A673 (cell line): ENCODE measurements at regions of chr2 and their contacts with region 1.

Region 1: DNA sequence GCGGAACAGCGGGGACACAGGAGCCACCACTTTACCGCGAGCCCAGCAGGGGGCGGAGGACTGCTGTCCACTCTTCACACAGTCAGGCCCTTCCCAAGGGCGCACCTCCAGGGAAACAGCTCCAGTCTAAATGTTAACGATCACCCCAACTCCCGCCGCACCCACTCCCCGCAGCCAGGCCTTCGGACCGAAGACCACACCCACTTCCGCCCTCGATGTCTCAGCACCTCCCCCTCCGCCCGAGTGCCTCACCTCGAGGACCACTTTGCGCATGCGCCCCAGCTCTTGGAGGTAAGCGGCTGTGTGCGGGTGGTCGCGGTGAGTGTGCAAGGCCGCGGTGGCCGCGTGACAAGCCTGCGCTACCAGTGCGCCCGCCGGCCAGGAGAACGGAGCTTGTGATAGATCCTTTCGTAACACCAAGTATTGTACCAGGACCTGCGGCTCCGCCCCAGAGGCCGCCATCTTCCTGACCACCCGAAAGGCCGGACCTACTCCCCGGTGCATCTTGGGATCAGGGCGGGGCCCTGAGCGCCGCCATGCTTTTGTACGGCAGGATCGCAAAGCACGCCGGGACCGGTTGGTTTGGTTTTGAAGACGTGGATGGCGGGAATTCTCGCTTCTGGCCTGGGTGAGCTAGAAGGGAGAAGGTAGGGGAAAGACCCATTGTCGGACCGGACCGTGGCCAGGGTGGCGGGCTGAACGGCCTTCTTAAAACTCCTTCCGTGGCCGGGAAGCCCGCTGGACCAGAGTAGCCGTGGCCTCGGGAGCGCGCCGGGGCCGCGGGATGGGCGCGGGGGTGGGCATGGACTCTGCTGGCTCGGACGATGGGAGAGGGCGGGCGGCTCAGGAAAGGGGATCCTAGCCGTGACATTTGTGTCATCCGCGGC is at the starts of genes CENPO and PTRHD1:
- DNase-seq: peak; percentile 98
- H3K4me3 ChIP-seq: peak within 1 kb of the TSS; percentile 92
- H3K27ac ChIP-seq: peak within 1 kb of the TSS; percentile 99
- H3K4me1 ChIP-seq: peaks cover 23% of the 10 kb centered on the region
- H3K27me3 ChIP-seq: no peaks in the 10 kb centered on the region
- CTCF ChIP-seq: peak; percentile 38; the same call in 1 of the 2 replicates
- total RNA-seq, gene CENPO: 61.9 and 69.4 TPM in 2 replicates
- total RNA-seq, gene PTRHD1: 33.4 and 34.9 TPM in 2 replicates

Region 2: GRCh38 chr2:24490674-24491625 is 302.2 kb before region 1 on chr2 and contains the start of gene NCOA1:
- CTCF ChIA-PET with region 1: no interaction called
- POLR2A ChIA-PET with region 1: no interaction called
- intact Hi-C with region 1: loop called (anchors 2 kb)
- DNase-seq: peak; percentile 96
- H3K4me3 ChIP-seq: peak within 1 kb of the TSS; percentile 84
- H3K27ac ChIP-seq: peak within 1 kb of the TSS; percentile 87
- H3K4me1 ChIP-seq: peaks cover 46% of the 10 kb centered on the region
- H3K27me3 ChIP-seq: no peaks in the 10 kb centered on the region
- CTCF ChIP-seq: no peak
- total RNA-seq, gene NCOA1: 27.5 TPM in 2 replicates

Region 3: DNA sequence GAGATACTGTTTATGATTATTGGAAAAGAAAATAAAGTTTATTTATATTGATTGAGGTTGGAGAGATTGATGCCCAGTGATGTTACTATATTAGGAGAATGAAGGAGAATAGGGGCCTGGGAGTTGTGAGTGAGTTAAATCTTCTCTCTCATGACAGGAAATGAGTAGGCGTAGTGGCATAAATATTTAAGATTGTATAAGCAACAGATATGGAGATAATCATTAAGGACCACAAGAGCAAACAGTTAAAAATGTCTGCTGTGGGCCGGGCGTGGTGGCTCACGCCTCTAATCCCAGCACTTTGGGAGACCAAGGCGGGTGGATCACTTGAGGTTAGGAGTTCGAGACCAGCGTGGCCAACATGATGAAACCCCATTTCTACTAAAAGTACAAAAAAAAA is 62.6 kb before region 1 on chr2:
- CTCF ChIA-PET with region 1: interaction called, 14 read pairs
- POLR2A ChIA-PET with region 1: no interaction called
- intact Hi-C with region 1: no loop called
- DNase-seq: peak; percentile 83
- H3K4me3 ChIP-seq: no peak overlapping the region
- H3K27ac ChIP-seq: peak overlapping the region; percentile 47
- H3K4me1 ChIP-seq: peaks cover 17% of the 10 kb centered on the region
- H3K27me3 ChIP-seq: no peaks in the 10 kb centered on the region
- CTCF ChIP-seq: no peak

Region 4: GRCh38 chr2:25218100-25218499 is 425.0 kb after region 1 on chr2:
- CTCF ChIA-PET with region 1: no interaction called
- POLR2A ChIA-PET with region 1: interaction called, 11 read pairs
- intact Hi-C with region 1: no loop called
- DNase-seq: no peak
- H3K4me3 ChIP-seq: no peak overlapping the region
- H3K27ac ChIP-seq: no peak overlapping the region
- H3K4me1 ChIP-seq: no peaks in the 10 kb centered on the region
- H3K27me3 ChIP-seq: no peaks in the 10 kb centered on the region
- CTCF ChIP-seq: no peak

Region 5: DNA sequence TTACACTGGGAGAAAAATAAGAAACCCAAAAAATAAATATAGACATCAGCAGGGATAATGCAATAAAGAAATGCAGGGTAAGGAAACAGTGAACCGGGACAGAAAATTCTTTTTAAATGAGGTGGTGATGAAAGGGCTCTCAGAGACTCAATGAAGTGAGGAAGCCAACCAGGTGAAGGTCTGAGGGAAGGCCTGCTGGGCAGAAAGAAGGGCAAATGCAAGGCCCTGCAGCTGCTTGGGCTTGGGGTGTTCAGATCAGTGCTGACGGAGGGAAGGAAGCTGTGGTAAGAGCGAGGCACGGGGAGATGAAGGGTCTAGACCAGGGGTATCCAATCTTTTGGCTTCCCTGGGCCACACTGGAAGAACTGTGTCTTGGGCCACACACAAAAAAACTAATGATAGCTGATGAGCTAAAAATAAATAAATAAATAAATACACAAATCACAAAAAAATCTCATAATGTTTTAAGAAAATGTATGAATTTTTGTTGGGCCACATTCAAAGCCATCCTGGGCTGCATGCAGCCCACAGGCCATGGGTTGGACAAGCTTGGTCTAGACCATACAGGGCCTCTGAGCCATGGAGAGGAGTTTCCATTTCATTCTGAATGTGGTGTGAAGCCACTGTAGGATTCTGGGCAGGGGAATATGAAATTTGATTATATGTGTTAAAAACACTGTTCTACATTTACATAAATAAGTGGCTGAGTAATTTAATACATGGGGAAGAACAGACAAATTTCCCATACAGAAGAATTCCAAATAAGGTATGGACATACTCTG is 645.0 kb after region 1 on chr2:
- CTCF ChIA-PET with region 1: no interaction called
- POLR2A ChIA-PET with region 1: no interaction called
- intact Hi-C with region 1: no loop called
- DNase-seq: no peak
- H3K4me3 ChIP-seq: no peak overlapping the region
- H3K27ac ChIP-seq: no peak overlapping the region
- H3K4me1 ChIP-seq: no peaks in the 10 kb centered on the region
- H3K27me3 ChIP-seq: no peaks in the 10 kb centered on the region
- CTCF ChIP-seq: no peak